Posterior vena cava (tissue), 2 donors: ENCODE measurements at regions of chr17 and their contacts with region 1.

Region 1: DNA sequence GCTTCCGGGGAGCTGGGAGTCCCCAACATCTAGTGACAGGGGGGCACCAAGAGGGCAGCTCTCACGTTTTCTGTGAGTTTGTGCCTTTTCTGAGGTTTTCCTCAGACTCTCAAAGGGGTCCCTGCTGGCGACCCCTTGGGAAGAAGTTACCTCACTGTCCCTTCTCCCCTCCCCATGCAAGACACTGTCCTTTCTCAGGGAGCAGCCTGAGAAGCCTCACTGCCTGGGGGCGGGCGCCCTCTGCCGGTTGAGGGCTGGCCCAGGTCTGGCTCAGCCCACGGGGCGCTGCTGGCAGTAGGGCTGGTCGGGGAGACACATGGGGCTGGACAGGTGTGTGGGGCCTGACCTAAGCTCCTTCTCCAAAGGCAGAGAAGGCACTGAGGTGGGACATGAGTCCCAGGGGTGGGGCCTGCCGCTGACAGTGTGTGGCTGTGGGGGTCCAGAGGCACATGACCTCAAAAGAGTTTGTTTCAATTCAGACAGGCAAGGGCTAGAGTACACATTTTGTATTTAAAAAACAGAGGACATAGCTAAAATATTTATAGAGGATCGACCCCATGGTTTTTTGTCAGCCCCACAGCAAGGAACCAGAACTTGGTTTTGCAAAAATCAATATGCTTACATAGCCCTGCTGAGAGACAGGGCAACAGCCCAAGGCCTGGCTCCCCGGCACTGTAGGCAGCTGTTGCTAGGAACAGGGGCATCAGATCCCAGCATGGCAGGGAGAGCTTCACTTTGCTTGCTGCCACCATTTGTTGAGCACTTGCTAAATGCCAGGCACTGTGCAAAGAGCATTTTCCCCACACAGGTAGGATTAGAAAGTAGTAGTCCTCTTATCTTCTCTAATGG is 18.5 kb upstream of the ALDH3A1 start:
- DNase-seq: peak; percentile 93

Region 2: GRCh38 chr17:18992454-18993130 is 774.1 kb before region 1 on chr17:
- intact Hi-C with region 1: loop called in 1 of 2 experiments (anchors 5 kb)
- DNase-seq: no peak

Region 3: DNA sequence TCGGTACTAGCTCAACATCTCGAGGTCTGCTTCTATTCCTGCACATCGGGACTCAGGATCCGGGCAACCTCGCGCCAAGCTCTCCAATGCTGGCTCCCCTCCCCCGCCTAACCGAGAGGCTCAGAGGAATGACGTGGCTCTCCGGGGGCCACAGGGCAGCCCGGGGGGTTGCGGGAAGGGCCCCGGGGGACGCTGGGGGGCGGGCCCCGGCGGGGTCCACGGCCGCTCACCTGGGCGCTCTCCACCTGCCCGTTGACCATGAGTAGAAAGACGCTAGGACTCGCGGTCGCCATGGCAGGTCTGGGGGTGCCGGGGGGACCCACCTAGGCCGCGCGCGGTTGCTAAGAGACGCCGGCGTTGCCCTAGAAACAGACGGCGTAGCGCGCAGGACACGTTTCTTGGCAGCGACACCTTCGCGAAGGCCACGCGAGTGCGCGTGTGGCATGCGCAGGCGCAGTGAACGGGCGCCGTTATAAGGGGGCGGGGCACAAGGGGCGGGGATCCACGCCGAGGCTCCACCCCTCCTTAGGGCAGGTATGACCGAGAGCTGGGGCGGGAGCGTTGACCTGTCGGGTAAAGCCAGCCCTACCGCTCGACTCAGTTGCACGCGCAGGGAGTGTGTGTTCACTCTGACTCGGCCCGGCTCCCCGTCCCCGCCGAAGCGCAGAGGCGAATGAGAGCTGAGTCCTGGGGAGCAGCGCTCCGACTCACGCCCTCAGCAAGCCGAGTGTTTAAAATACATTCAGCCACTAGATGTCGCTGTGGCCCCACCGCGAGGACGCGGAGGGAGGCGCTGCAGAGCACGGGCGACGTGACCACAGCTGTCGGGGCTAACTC is 404.2 kb before region 1 on chr17 and contains the start of gene B9D1:
- intact Hi-C with region 1: loop called (anchors 5 to 10 kb)
- DNase-seq: peak; percentile 98
- total RNA-seq, gene B9D1: 7.7 to 9.8 TPM

Region 4: GRCh38 chr17:19513897-19514488 is 252.7 kb before region 1 on chr17:
- intact Hi-C with region 1: loop called (anchors 5 kb)
- DNase-seq: no peak